K562 (cell line): ENCODE measurements at regions of chr9 and their contacts with region 1.

Region 1: GRCh38 chr9:76393963-76394679 is at the start of gene RFK:
- DNase-seq: peak; percentile 86 to 91 (median 87)
- ATAC-seq: peak; percentile 95
- H3K4me3 ChIP-seq: peak within 1 kb of the TSS; percentile 85
- H3K27ac ChIP-seq: peak within 1 kb of the TSS; percentile 85
- H3K4me1 ChIP-seq: peaks cover 11% of the 10 kb centered on the region in 2 experiments; a peak in 3 of 5 replicates
- H3K27me3 ChIP-seq: no peaks in the 10 kb centered on the region
- CTCF ChIP-seq: peak; percentile 39 to 80 (median 74); a peak in 4 of 6 replicates
- EP300 ChIP-seq: no peak
- POLR2A ChIP-seq: peak; percentile 69
- RAD21 ChIP-seq: peak; percentile 58 to 65
- polyA plus RNA-seq, gene RFK: 3.8 to 7.0 TPM

Region 2: GRCh38 chr9:75739884-75740611 is 654.1 kb before region 1 on chr9:
- CTCF ChIA-PET with region 1: no interaction called
- POLR2A ChIA-PET with region 1: no interaction called
- in situ Hi-C with region 1: no loop called
- intact Hi-C with region 1: no loop called
- DNase-seq: no peak
- ATAC-seq: no peak
- H3K4me3 ChIP-seq: no peak overlapping the region
- H3K27ac ChIP-seq: no peak overlapping the region
- H3K4me1 ChIP-seq: no peaks in the 10 kb centered on the region
- H3K27me3 ChIP-seq: no peaks in the 10 kb centered on the region
- CTCF ChIP-seq: no peak
- EP300 ChIP-seq: no peak
- POLR2A ChIP-seq: no peak
- RAD21 ChIP-seq: no peak

Region 3: DNA sequence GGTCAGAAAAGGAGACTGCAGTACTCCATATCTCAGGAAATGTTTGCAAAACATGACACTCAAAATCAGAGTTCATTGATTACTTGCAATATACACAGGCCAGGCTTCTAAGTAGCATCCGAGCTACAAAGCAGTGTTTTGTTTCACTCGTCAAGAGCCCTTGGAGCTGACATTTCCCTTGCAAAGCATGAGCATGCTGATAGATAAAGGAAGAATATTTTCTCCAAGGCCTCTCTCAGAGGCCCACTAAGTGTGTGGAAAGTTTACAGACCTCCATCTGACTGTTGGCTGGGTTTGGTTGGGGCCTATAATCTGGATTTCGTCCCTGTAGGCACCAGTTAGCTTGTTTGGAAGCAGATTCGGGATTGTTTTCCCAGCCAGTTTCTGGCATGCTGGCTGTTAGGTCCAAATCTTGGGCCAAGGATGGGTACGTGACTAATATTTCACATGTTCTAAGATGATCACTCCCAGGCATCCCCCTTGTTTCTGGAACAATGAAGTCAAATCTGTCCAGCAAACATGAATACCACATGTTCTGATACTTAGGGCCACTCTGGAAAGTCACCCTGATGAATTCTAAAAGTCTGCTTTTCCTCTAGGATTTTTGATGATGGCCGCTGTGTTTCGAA is 161.1 kb before region 1 on chr9:
- CTCF ChIA-PET with region 1: no interaction called
- POLR2A ChIA-PET with region 1: no interaction called
- in situ Hi-C with region 1: no loop called
- intact Hi-C with region 1: no loop called
- DNase-seq: no peak
- ATAC-seq: no peak
- H3K4me3 ChIP-seq: no peak overlapping the region
- H3K27ac ChIP-seq: no peak overlapping the region
- H3K4me1 ChIP-seq: no peaks in the 10 kb centered on the region
- H3K27me3 ChIP-seq: no peaks in the 10 kb centered on the region
- CTCF ChIP-seq: no peak
- EP300 ChIP-seq: no peak
- POLR2A ChIP-seq: no peak
- RAD21 ChIP-seq: no peak

Region 4: GRCh38 chr9:76358593-76359280 is 35.4 kb before region 1 on chr9:
- CTCF ChIA-PET with region 1: no interaction called
- POLR2A ChIA-PET with region 1: interaction called, 10 read pairs
- in situ Hi-C with region 1: no loop called
- intact Hi-C with region 1: no loop called
- DNase-seq: no peak
- ATAC-seq: no peak
- H3K4me3 ChIP-seq: no peak overlapping the region
- H3K27ac ChIP-seq: peak overlapping the region; percentile 51; the same call in 2 of the 3 replicates
- H3K4me1 ChIP-seq: peaks cover 6 to 48% of the 10 kb centered on the region in 2 experiments; a peak in 3 of 5 replicates
- H3K27me3 ChIP-seq: no peaks in the 10 kb centered on the region
- CTCF ChIP-seq: no peak
- EP300 ChIP-seq: no peak
- POLR2A ChIP-seq: no peak
- RAD21 ChIP-seq: no peak

Region 5: DNA sequence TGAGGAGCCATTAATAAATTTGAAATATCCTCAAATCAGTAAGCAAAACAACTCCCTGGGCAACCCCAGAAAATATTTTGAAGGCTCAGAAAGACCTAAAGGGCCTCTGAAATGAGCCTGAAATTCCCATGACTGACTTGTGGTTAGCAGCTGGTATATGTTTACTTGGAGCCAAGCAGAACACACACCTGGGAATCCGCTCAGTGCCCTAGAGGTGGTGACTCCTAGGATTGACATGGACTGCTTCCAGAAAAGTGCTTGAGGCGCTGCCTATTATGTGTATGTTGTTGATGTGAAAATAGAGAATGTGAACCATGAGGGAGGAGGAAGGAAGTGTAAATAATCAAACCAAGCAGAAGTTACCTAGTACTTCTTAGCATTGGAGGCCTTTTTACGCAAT is 14.6 kb before region 1 on chr9:
- CTCF ChIA-PET with region 1: no interaction called
- POLR2A ChIA-PET with region 1: interaction called, 17 read pairs
- in situ Hi-C with region 1: no loop called
- intact Hi-C with region 1: no loop called
- DNase-seq: no peak
- ATAC-seq: no peak
- H3K4me3 ChIP-seq: no peak overlapping the region
- H3K27ac ChIP-seq: no peak overlapping the region
- H3K4me1 ChIP-seq: peaks cover 0 to 6% of the 10 kb centered on the region in 2 experiments; a peak in 2 of 5 replicates
- H3K27me3 ChIP-seq: no peaks in the 10 kb centered on the region
- CTCF ChIP-seq: no peak
- EP300 ChIP-seq: no peak
- POLR2A ChIP-seq: no peak
- RAD21 ChIP-seq: no peak

Region 6: GRCh38 chr9:77024776-77025545 is 630.8 kb after region 1 on chr9:
- CTCF ChIA-PET with region 1: no interaction called
- POLR2A ChIA-PET with region 1: no interaction called
- in situ Hi-C with region 1: no loop called
- intact Hi-C with region 1: no loop called
- DNase-seq: no peak
- ATAC-seq: no peak
- H3K4me3 ChIP-seq: no peak overlapping the region
- H3K27ac ChIP-seq: no peak overlapping the region
- H3K4me1 ChIP-seq: no peaks in the 10 kb centered on the region; a peak in 1 of 5 replicates
- H3K27me3 ChIP-seq: peaks cover 0 to 20% of the 10 kb centered on the region in 2 experiments; a peak in 2 of 5 replicates
- CTCF ChIP-seq: no peak
- EP300 ChIP-seq: no peak
- POLR2A ChIP-seq: no peak
- RAD21 ChIP-seq: no peak